A673 (cell line): ENCODE measurements at regions of chr10 and their contacts with region 1.

Region 1: GRCh38 chr10:72273410-72274212 is at the start of gene DDIT4:
- DNase-seq: peak; percentile 99
- H3K4me3 ChIP-seq: peak within 1 kb of the TSS; percentile 86
- H3K27ac ChIP-seq: peak within 1 kb of the TSS; percentile 95
- H3K4me1 ChIP-seq: peaks cover 33% of the 10 kb centered on the region
- H3K27me3 ChIP-seq: no peaks in the 10 kb centered on the region
- CTCF ChIP-seq: no peak
- total RNA-seq, gene DDIT4: 20.7 and 39.6 TPM in 2 replicates

Region 2: GRCh38 chr10:71708301-71708703 is 565.3 kb before region 1 on chr10:
- CTCF ChIA-PET with region 1: no interaction called
- POLR2A ChIA-PET with region 1: no interaction called
- intact Hi-C with region 1: no loop called
- DNase-seq: peak; percentile 58
- H3K4me3 ChIP-seq: no peak overlapping the region
- H3K27ac ChIP-seq: no peak overlapping the region
- H3K4me1 ChIP-seq: peaks cover under 1% of the 10 kb centered on the region
- H3K27me3 ChIP-seq: no peaks in the 10 kb centered on the region
- CTCF ChIP-seq: peak; percentile 88

Region 3: DNA sequence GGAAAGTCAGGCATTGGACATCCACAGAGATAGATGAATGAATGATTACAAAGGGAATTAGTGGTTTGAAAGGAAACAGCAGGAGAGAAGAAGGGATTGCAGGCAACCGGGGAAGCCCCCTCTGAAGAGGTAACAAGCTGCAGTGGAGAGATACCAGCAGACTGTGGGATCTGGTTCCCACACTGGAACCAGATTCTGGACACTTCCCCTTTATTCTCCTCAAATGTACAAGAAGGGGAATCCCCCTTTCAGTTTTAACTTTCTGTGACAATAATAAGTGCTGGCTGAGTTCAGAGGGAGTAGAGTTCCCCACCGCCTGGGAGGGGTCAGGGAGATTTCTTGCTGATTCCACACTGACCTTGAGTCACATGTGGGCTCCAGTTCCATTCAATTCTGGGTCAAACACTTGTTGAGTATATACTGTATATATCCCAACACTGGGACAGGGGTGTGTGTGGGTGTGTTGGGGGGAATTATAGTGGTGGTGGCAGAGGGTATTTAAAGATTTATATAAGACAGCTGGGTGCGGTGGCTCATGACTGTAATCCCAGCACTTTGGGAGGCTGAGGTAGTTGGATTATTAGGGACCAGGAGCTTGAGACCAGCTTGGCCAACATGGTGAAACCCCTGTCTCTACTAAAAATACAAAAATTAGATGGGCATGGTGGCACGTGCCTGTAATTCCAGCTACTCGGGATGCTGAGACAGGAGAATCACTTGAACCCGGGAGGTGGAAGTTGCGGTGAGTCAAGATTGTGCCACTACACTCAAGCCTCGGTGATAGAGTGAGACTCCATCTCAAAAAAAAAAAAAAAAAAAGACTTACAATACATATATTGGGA is 16.3 kb before region 1 on chr10:
- CTCF ChIA-PET with region 1: interaction called, 5 read pairs
- POLR2A ChIA-PET with region 1: interaction called, 44 read pairs
- intact Hi-C with region 1: no loop called
- DNase-seq: no peak
- H3K4me3 ChIP-seq: no peak overlapping the region
- H3K27ac ChIP-seq: peak overlapping the region; percentile 11
- H3K4me1 ChIP-seq: peaks cover 49% of the 10 kb centered on the region
- H3K27me3 ChIP-seq: no peaks in the 10 kb centered on the region
- CTCF ChIP-seq: no peak

Region 4: DNA sequence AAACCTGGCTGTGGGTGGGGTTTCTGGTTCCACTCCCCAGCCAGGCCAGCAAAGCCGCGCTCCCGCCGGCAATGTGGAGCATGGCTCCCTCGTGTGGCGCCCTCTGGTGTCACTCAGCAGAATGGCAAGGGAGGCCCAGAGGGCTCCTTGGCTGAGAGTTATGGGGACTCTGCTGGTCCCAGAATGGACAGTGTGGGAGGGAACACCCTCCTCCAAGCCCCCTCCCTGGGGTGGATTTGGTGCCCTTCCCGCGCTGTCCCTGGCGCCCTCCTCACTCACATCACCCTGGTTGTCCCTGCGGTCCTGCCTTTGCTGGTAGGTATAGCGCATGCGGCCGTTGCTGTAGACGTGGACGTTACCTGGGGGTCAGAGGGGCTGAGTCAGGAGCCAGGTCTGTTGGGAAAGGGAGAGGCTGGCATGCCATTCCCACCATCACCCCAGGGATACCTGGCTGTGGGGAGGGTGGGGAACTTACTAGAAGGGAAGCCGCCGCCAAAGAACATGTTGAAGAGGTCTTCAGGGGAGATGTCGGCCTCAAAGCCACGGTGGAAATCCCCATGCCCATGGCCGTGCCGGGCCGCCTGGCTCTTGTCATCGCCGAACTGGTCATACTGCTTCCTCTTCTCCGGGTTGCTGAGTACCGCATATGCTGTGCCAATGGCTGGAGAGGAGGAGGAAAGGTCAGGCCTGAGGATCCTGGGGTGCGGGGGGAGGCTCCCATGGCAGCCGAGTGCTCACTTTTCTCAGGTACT is 67.1 kb after region 1 on chr10:
- CTCF ChIA-PET with region 1: no interaction called
- POLR2A ChIA-PET with region 1: no interaction called
- intact Hi-C with region 1: no loop called
- DNase-seq: peak; percentile 79
- H3K4me3 ChIP-seq: no peak overlapping the region
- H3K27ac ChIP-seq: no peak overlapping the region
- H3K4me1 ChIP-seq: peaks cover 8% of the 10 kb centered on the region
- H3K27me3 ChIP-seq: no peaks in the 10 kb centered on the region
- CTCF ChIP-seq: peak; percentile 98